PC-9 (cell line): ENCODE measurements at regions of chr9 and their contacts with region 1.

Region 1: GRCh38 chr9:36276781-36277181 is 18.5 kb upstream of the GNE start:
- DNase-seq: peak; percentile 50 to 88
- H3K4me3 ChIP-seq: peak overlapping the region; percentile 74
- H3K27ac ChIP-seq: peak overlapping the region; percentile 91
- H3K4me1 ChIP-seq: peaks cover 47% of the 10 kb centered on the region
- H3K27me3 ChIP-seq: no peaks in the 10 kb centered on the region
- CTCF ChIP-seq: no peak

Region 2: GRCh38 chr9:35993976-35994720 is 282.6 kb before region 1 on chr9:
- CTCF ChIA-PET with region 1: no interaction called
- POLR2A ChIA-PET with region 1: interaction called, 12 read pairs
- intact Hi-C with region 1: no loop called
- DNase-seq: no peak
- H3K4me3 ChIP-seq: no peak overlapping the region
- H3K27ac ChIP-seq: no peak overlapping the region
- H3K4me1 ChIP-seq: no peaks in the 10 kb centered on the region
- H3K27me3 ChIP-seq: no peaks in the 10 kb centered on the region
- CTCF ChIP-seq: no peak

Region 3: DNA sequence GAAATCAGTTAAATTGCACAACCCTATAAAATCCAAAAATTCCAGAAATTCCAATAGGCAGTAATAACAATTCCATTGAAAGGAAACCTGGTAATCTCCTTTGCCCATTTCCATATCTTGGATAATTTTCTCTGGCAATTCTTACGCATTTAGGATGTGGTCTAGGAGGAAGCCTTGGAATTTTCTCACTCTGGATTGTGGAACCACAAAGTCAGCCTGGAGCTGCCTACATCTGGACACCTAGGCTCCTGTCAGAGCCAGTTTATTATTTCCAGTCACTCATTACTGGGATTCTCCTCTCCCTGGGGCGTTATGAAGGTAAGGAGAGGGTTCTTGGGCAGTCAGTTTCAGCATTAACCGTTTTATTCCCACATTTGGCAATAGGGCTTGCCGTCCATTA is 21.8 kb after region 1 on chr9:
- CTCF ChIA-PET with region 1: no interaction called
- POLR2A ChIA-PET with region 1: interaction called, 3 read pairs
- intact Hi-C with region 1: loop called (anchors 1 kb)
- DNase-seq: no peak
- H3K4me3 ChIP-seq: no peak overlapping the region
- H3K27ac ChIP-seq: peak overlapping the region; percentile 97
- H3K4me1 ChIP-seq: peaks cover 52% of the 10 kb centered on the region
- H3K27me3 ChIP-seq: no peaks in the 10 kb centered on the region
- CTCF ChIP-seq: no peak

Region 4: GRCh38 chr9:36317764-36318163 is 41.0 kb after region 1 on chr9:
- CTCF ChIA-PET with region 1: interaction called, 10 read pairs
- POLR2A ChIA-PET with region 1: interaction called, 11 read pairs
- intact Hi-C with region 1: loop called (anchors 1 kb)
- DNase-seq: peak; percentile 89 to 96
- H3K4me3 ChIP-seq: no peak overlapping the region
- H3K27ac ChIP-seq: peak overlapping the region; percentile 95
- H3K4me1 ChIP-seq: peaks cover 61% of the 10 kb centered on the region
- H3K27me3 ChIP-seq: no peaks in the 10 kb centered on the region
- CTCF ChIP-seq: no peak

Region 5: GRCh38 chr9:36328798-36329411 is 52.1 kb after region 1 on chr9:
- CTCF ChIA-PET with region 1: no interaction called
- POLR2A ChIA-PET with region 1: no interaction called
- intact Hi-C with region 1: loop called (anchors 2 kb)
- DNase-seq: peak; percentile 29 to 65
- H3K4me3 ChIP-seq: no peak overlapping the region
- H3K27ac ChIP-seq: no peak overlapping the region
- H3K4me1 ChIP-seq: peaks cover 17% of the 10 kb centered on the region
- H3K27me3 ChIP-seq: no peaks in the 10 kb centered on the region
- CTCF ChIP-seq: peak; percentile 88